Esophagus squamous epithelium (tissue), 5 donors: ENCODE measurements at regions of chr19 and their contacts with region 1.

Region 1: DNA sequence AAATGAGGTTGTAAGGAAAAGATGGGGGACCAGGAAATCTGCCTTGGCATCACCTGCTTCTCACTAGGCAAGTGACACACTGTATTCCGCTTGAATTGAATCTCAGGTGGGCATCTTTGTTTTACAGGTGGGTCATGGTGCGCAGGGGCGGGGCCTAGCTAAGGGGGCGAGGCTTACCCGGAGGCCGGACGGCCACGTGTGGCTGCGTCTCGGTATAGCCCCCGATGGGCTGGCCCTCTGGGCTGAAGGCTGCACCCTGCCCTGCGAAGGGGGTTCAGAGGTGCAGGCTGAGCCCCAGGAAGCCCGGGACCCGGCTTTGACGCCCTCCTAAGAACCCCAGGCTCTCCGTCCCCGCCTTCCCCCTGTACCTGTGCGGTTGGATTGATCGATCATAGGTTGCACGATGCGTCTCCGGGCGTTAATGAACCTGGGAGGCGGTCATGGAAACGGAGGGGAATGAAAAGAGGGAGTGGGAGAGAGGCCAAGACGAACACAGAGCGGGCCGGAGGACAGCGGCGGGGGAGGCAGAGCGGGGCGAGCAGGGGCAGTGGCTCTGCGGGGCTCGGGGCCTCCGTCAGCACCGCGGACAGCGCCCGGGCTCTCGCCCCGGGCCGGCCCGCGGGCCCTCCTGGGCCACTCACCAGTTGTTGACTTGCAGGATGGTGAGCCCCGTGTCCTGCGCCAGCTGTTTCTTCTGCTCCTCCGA is 12.5 kb downstream of the MEIS3 start:
- DNase-seq: no peak
- H3K4me3 ChIP-seq: no peak overlapping the region
- H3K27ac ChIP-seq: no peak overlapping the region
- H3K4me1 ChIP-seq: peaks cover 0 to 5% (median 0%) of the 10 kb centered on the region in 3 donors
- H3K27me3 ChIP-seq: peaks cover 0 to 63% (median 0%) of the 10 kb centered on the region in 4 donors
- CTCF ChIP-seq: no peak
- POLR2A ChIP-seq: no peak

Region 2: DNA sequence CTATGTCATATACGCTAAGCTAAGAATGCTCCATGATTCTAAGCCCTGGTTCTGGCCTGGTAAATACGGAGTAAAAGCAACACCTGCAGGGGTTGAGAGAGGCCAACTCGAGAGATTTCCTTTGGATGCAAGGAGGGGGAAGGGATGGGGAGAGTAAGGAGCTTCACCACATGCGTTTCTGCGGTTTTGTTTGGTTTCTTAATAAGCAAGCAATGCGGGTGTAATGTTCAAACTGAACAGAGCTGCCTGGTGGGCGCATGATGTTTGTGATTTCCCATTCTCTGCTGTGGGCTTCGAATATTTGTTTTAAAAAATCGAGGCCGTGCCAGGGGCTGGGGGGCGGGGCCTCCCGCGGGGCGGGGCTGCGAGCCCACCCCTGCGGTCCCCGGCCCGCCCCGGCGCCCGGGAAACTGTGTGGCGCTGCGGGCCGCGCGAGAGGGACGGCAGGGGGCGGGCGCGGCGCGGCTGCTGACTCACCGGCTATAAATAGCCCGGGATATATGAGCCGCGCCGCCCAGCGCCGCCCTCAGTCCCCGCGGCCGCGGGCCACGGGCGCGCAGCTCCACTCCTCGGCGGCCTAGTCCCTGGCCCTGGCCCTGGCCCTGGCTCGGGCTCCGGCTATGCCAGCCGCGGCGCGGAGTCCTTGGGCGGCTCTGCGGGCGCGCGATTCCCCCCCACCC is 181.0 kb before region 1 on chr19:
- intact Hi-C with region 1: no loop called
- DNase-seq: no peak
- H3K4me3 ChIP-seq: peak overlapping the region; percentile 34 to 99 (median 74)
- H3K27ac ChIP-seq: peak overlapping the region; percentile 94 to 100 (median 98)
- H3K4me1 ChIP-seq: peaks cover 29 to 58% (median 32%) of the 10 kb centered on the region in 3 donors
- H3K27me3 ChIP-seq: peaks cover 0 to 25% (median 0%) of the 10 kb centered on the region in 4 donors
- CTCF ChIP-seq: peak in 5 of 6 experiments; percentile 30 to 76 (median 68)
- POLR2A ChIP-seq: peak; percentile 48 to 100 (median 98)

Region 3: DNA sequence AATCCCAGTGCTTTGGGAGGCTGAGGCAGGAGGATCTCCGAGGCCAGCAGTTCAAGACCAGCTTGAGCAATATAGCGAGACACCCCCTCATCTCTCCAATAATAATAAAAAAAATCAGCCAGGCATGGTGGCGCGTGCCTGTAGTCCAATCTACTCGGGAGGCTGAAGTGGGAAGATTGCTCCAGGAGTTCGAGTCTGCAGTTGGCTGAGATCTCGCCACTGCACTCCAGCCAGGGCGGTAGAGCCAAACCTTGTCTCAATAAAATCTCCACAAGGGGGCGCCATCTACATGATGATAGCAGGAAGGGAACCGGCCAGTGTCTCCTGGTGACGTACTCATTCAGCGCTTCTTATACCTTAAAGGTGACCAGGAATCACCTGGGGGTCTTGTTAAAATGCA is 110.8 kb before region 1 on chr19:
- intact Hi-C with region 1: loop called (anchors 10 kb)
- DNase-seq: no peak
- H3K4me3 ChIP-seq: no peak overlapping the region
- H3K27ac ChIP-seq: no peak overlapping the region
- H3K4me1 ChIP-seq: peaks cover 0 to 5% (median 0%) of the 10 kb centered on the region in 3 donors
- H3K27me3 ChIP-seq: no peaks in the 10 kb centered on the region
- CTCF ChIP-seq: peak; percentile 71 to 83 (median 76)
- POLR2A ChIP-seq: no peak